Calu3 (cell line): ENCODE measurements at regions of chr20 and their contacts with region 1.

Region 1: GRCh38 chr20:58466729-58467571 is 48.2 kb downstream of the APCDD1L start:
- DNase-seq: no peak
- H3K4me3 Mint-ChIP-seq: no peak overlapping the region
- H3K27ac Mint-ChIP-seq: no peak overlapping the region
- H3K4me1 Mint-ChIP-seq: no peaks in the 10 kb centered on the region
- H3K27me3 Mint-ChIP-seq: peaks cover 27% of the 10 kb centered on the region
- CTCF ChIP-seq: no peak

Region 2: GRCh38 chr20:58584881-58585752 is 118.2 kb after region 1 on chr20:
- CTCF ChIA-PET with region 1: interaction called, 10 read pairs
- intact Hi-C with region 1: no loop called
- DNase-seq: no peak
- H3K4me3 Mint-ChIP-seq: no peak overlapping the region
- H3K27ac Mint-ChIP-seq: no peak overlapping the region
- H3K4me1 Mint-ChIP-seq: no peaks in the 10 kb centered on the region
- H3K27me3 Mint-ChIP-seq: peaks cover 91% of the 10 kb centered on the region
- CTCF ChIP-seq: no peak